ENCODE measurements at regions of chr12 and their contacts with region 1.

Region 1: GRCh38 chr12:123271001-123271729 is 491 bp downstream of the CDK2AP1 start:
- DNase-seq: peak; percentile 78 to 79
- ATAC-seq: peak; percentile 25 to 70 (median 52)
- H3K4me3 ChIP-seq: peak overlapping the region; percentile 63 to 95 (median 75)
- H3K27ac ChIP-seq: peak overlapping the region; percentile 54 to 90 (median 84)
- H3K4me1 ChIP-seq: peaks cover 3 to 43% (median 36%) of the 10 kb centered on the region in 9 donors
- H3K27me3 ChIP-seq: no peaks in the 10 kb centered on the region
- CTCF ChIP-seq: peak; percentile 18 to 76 (median 56)

Region 2: DNA sequence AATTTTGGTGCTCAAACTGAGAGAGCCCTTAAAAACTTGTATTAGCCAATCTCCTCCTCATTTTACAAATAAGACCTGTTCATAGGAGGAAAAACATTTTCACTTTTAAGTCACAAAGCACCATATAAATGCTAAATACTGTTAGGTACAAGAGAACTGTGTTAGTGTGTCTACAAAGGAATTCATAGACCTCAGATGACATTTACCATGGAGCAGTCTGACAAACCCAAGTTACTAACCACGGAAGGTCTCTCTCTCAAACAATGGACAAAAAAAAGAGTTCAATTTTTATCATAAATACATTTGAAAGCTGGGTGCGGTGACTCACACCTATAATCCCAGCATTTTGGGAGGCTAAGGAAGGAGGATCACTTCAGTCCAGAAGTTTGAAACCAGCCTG is 83.4 kb after region 1 on chr12:
- intact Hi-C with region 1: loop called in 1 of 10 experiments (anchors 10 kb)
- DNase-seq: no peak
- ATAC-seq: no peak
- H3K4me3 ChIP-seq: no peak overlapping the region
- H3K27ac ChIP-seq: no peak overlapping the region
- H3K4me1 ChIP-seq: peaks cover 0 to 59% (median 38%) of the 10 kb centered on the region in 9 donors
- H3K27me3 ChIP-seq: no peaks in the 10 kb centered on the region
- CTCF ChIP-seq: no peak

Region 3: DNA sequence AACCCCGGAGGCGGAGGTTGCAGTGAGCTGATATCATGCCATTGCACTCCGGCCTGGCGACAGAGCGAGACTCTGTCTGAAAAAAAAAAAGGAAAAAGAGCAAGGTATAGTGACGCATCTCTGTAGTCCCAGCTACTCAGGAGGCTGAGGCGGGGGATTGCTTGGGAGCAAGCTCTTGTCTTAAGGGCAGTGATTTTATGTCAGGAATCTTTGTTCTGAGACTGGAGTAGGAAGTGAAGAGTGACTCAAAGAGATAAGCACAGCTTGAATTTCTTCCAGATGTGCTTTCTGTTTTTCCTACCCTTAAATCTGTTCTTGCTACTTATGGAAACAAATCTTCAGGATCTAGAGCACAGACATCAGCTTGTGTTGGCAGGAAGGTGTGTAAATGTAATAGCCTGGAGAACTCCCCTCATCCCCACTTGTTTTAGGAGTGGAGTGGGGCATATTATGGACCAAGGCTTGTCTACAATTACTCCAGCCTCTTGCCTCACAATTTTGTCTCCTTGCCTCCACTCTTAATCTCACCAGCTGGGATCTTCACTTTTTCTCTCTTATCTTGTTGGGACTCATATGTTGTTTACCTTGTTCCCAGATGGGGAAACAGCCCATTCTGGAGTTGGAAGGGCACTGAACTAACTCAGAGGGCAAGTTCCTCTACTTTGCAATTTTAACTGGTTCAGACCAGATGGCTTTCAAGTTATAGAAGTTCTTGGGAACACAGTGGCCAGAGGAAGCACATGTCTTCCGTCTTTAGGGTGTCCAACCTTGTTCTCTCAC is 320.7 kb after region 1 on chr12:
- intact Hi-C with region 1: loop called in 1 of 10 experiments (anchors 10 kb)
- DNase-seq: no peak
- ATAC-seq: no peak
- H3K4me3 ChIP-seq: no peak overlapping the region
- H3K27ac ChIP-seq: no peak overlapping the region
- H3K4me1 ChIP-seq: peaks cover 5 to 48% (median 40%) of the 10 kb centered on the region in 9 donors
- H3K27me3 ChIP-seq: no peaks in the 10 kb centered on the region
- CTCF ChIP-seq: no peak

Region 4: GRCh38 chr12:124720004-124720680 is 1449.0 kb after region 1 on chr12:
- intact Hi-C with region 1: no loop called
- DNase-seq: no peak
- ATAC-seq: peak; percentile 9 to 46 (median 33)
- H3K4me3 ChIP-seq: no peak overlapping the region
- H3K27ac ChIP-seq: peak overlapping the region; percentile 24 to 82 (median 55)
- H3K4me1 ChIP-seq: peaks cover 7 to 51% (median 17%) of the 10 kb centered on the region in 9 donors
- H3K27me3 ChIP-seq: no peaks in the 10 kb centered on the region
- CTCF ChIP-seq: peak in 6 of 9 donors; percentile 9 to 38 (median 34)

Measured in heart right ventricle (tissue), 16 donors.